ENCODE measurements at regions of chr5 and their contacts with region 1.

Region 1: DNA sequence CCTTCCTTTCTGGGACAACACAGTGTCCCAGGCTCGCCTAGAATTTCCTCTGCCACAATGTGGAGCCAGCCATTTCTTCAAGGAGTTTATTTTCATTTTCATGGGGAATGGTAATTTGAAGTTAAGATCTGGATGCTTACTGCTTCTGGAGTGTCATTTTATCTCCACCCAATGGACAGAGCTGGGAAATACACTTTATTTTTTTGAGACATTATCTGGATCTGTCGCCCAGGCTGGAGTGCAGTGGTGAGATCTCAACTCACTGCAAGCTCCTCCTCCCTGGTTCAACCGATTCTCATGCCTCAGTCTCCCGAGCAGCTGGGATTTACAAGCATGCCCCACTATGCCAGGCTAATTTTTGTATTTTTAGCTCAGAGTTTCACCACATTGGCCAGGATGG is 12.7 kb upstream of the THG1L start:
- DNase-seq: no peak
- H3K4me3 Mint-ChIP-seq: peak overlapping the region; percentile 45
- H3K27ac Mint-ChIP-seq: peak overlapping the region; percentile 59
- H3K4me1 Mint-ChIP-seq: peaks cover 45% of the 10 kb centered on the region
- H3K27me3 Mint-ChIP-seq: no peaks in the 10 kb centered on the region

Region 2: DNA sequence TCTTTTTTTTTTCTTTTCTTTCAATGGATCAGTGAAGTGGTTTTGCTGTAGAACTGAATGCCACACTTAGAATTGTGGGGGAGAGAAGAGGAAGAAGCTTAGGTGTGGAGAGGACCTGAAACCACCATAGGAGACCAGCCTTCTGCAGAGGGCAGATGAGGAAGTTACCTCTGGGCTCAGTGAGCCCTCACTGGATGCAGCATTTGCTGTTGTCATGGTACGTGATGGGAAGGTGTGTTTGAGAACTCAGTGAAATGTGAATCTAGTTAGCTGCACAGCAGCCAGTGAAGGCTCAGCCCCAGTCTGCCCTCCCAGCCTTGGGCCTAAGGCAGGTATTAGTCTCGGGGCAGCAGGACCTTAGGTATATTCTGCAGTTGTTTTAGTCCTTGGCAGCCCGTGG is 435.1 kb before region 1 on chr5:
- intact Hi-C with region 1: no loop called
- DNase-seq: no peak
- H3K4me3 Mint-ChIP-seq: no peak overlapping the region
- H3K27ac Mint-ChIP-seq: peak overlapping the region; percentile 49
- H3K4me1 Mint-ChIP-seq: peaks cover 83% of the 10 kb centered on the region
- H3K27me3 Mint-ChIP-seq: no peaks in the 10 kb centered on the region

Region 3: GRCh38 chr5:157431544-157432200 is 286.8 kb before region 1 on chr5:
- intact Hi-C with region 1: loop called (anchors 1 kb)
- DNase-seq: peak; percentile 7
- H3K4me3 Mint-ChIP-seq: no peak overlapping the region
- H3K27ac Mint-ChIP-seq: no peak overlapping the region
- H3K4me1 Mint-ChIP-seq: peaks cover 8% of the 10 kb centered on the region
- H3K27me3 Mint-ChIP-seq: peaks cover 22% of the 10 kb centered on the region

Region 4: GRCh38 chr5:157575381-157576020 is 143.0 kb before region 1 on chr5 and contains the start of gene ADAM19:
- intact Hi-C with region 1: loop called (anchors 2 kb)
- DNase-seq: peak; percentile 58
- H3K4me3 Mint-ChIP-seq: peak within 1 kb of the TSS; percentile 96
- H3K27ac Mint-ChIP-seq: peak within 1 kb of the TSS; percentile 92
- H3K4me1 Mint-ChIP-seq: peaks cover 64% of the 10 kb centered on the region
- H3K27me3 Mint-ChIP-seq: no peaks in the 10 kb centered on the region
- total RNA-seq, gene ADAM19: 341 and 348 TPM in 2 replicates

Region 5: GRCh38 chr5:157651623-157652549 is 66.6 kb before region 1 on chr5 and contains the start of gene SOX30:
- intact Hi-C with region 1: loop called (anchors 5 kb)
- DNase-seq: peak; percentile 75
- H3K4me3 Mint-ChIP-seq: peak within 1 kb of the TSS; percentile 80
- H3K27ac Mint-ChIP-seq: peak within 1 kb of the TSS; percentile 86
- H3K4me1 Mint-ChIP-seq: peaks cover 10% of the 10 kb centered on the region
- H3K27me3 Mint-ChIP-seq: no peaks in the 10 kb centered on the region
- total RNA-seq, gene SOX30: 0.12 and 0.29 TPM in 2 replicates

Region 6: DNA sequence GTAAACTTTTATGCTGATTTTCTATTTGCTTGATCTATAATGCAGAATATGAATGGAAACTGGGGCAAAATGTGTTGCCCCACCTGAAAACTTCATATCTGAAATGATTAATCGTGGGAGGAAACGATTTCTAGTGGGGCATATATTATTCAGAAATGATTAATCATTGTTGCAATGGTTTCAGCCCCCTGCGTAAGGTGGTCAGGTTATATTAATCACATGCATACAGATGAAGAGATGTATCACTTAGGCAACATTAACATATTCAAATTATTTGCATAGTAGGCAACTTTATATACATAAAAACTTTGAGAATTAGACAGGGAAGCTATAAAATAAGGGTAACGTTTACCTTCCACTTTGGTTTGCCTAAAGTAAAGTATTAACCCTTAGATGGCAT is 74.8 kb after region 1 on chr5:
- intact Hi-C with region 1: no loop called
- DNase-seq: no peak
- H3K4me3 Mint-ChIP-seq: no peak overlapping the region
- H3K27ac Mint-ChIP-seq: no peak overlapping the region
- H3K4me1 Mint-ChIP-seq: no peaks in the 10 kb centered on the region
- H3K27me3 Mint-ChIP-seq: no peaks in the 10 kb centered on the region